A549 (cell line): ENCODE measurements at regions of chr11 and their contacts with region 1.

Region 1: GRCh38 chr11:2382936-2383851 is 6.1 kb downstream of the CD81 start:
- DNase-seq: no peak
- ATAC-seq: peak in 1 of 2 experiments; percentile 32; a peak in 3 of 6 replicates
- H3K4me3 ChIP-seq: no peak overlapping the region
- H3K27ac ChIP-seq: peak overlapping the region in 1 of 2 experiments; percentile 58; a peak in 1 of 6 replicates
- H3K4me1 ChIP-seq: peaks cover 44% of the 10 kb centered on the region
- CTCF ChIP-seq: no peak
- EP300 ChIP-seq: no peak
- POLR2A ChIP-seq: no peak
- RAD21 ChIP-seq: no peak

Region 2: DNA sequence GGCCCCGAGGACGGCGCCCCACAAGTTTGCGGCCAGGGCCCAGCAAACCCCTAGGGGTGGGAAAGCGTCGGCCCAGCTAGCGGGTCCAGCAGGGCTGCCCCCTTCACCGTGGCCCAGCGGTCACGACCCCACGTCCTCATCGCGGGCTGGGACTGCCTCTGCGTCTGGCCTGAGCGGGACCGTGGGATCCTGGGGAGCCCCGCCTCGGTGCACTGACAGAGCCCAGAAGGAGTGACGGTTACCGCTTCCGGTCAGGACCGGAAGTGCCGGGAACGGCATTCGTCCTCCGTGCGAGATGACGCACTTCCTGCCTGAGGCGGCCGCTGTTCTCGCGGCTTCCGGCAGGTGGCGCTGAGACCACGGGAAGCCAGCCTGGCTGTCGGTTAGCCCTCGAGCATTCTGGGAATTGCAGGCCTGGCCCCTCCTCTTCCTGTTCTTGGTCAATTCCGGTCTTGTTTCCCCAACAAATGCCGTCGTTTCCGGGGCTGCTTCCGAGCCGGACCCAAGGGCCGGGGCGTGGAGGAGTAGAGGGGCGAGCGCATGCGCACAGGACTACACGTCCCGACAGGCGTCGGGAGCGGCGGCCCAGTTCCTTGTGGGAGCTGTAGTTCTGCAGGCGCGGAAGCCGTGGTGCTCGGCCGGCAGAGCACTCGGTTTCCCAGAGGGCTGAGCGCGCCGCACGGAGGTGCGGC is 17.0 kb after region 1 on chr11 and contains the start of gene TSSC4:
- CTCF ChIA-PET with region 1: interaction called, 20 read pairs
- POLR2A ChIA-PET with region 1: interaction called, 26 read pairs
- DNase-seq: peak; percentile 99 to 100
- ATAC-seq: peak; percentile 86 to 93
- H3K4me3 ChIP-seq: peak within 1 kb of the TSS; percentile 100
- H3K27ac ChIP-seq: peak within 1 kb of the TSS; percentile 97 to 98
- H3K4me1 ChIP-seq: peaks cover 16% of the 10 kb centered on the region
- CTCF ChIP-seq: peak; percentile 91
- EP300 ChIP-seq: no peak
- POLR2A ChIP-seq: peak; percentile 89
- RAD21 ChIP-seq: peak; percentile 60 to 66
- polyA plus RNA-seq, gene TSSC4: 21.8 and 22.2 TPM in 2 replicates